Activated naive CD4-positive, alpha-beta T cell treated with anti-CD3 and anti-CD28 coated beads for 36 hours (primary cell): ENCODE measurements at regions of chr12 and their contacts with region 1.

Region 1: GRCh38 chr12:76031537-76032073 is at the start of gene PHLDA1:
- DNase-seq: peak; percentile 96
- H3K4me3 Mint-ChIP-seq: peak within 1 kb of the TSS; percentile 90
- H3K27ac Mint-ChIP-seq: peak within 1 kb of the TSS; percentile 91
- H3K4me1 Mint-ChIP-seq: peaks cover 29% of the 10 kb centered on the region
- H3K27me3 Mint-ChIP-seq: peaks cover 2% of the 10 kb centered on the region
- total RNA-seq, gene PHLDA1: 2.7 to 2.8 TPM

Region 2: DNA sequence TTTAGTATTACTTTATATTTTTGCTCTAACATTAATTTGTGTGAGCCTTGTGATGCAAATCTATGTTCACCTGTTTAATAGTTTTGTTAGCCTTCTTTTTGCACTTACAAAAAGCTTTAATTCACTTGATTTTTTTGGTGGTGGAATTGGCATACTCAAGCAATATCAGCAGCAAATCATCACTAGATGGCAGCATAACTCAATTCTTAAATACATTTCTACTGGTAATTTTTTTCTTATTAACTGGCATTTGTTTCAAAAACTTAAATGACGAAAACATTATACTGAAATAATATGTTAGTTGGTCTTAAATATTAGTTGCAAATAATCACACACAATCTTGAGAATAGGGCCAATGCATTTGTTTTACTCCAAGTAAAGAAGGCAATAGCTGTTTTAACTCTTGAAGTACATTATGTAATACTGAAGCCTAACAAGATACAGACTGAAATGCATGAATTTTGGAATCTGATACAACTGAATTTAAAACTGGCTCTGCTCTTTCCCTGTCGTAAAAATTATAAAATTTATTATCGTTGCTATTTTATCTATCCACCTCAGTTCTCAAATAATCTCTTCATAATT is 1342.4 kb before region 1 on chr12:
- CTCF ChIA-PET with region 1: no interaction called
- intact Hi-C with region 1: loop called (anchors 5 kb)
- DNase-seq: no peak
- H3K4me3 Mint-ChIP-seq: no peak overlapping the region
- H3K27ac Mint-ChIP-seq: no peak overlapping the region
- H3K4me1 Mint-ChIP-seq: no peaks in the 10 kb centered on the region
- H3K27me3 Mint-ChIP-seq: peaks cover 8% of the 10 kb centered on the region

Region 3: DNA sequence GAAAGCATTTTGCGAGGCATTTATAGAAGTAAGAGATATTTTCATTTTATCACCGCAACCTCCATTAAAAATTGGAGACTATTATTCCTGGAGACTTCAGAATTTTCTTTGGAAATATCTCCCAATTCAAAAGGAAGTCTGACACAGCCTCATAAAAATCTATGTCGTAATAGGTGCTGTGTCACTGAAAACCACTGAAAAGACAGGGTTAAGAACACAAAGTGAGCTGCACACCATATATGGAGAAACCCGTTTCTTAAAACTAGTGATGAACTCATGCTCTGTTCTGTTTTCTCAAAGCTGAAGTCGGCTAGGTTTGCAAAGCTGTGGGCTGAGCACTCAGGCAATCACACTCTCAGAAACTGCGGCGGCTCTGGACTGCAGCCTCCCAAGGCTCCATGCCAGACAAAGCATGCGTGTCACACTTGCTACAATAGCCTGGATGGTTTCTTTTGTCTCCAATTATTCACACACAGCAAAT is 551.1 kb before region 1 on chr12 and contains the start of gene GLIPR1:
- CTCF ChIA-PET with region 1: interaction called, 5 read pairs
- intact Hi-C with region 1: loop called (anchors 1 kb)
- DNase-seq: peak; percentile 77
- H3K4me3 Mint-ChIP-seq: peak within 1 kb of the TSS; percentile 87
- H3K27ac Mint-ChIP-seq: peak within 1 kb of the TSS; percentile 82
- H3K4me1 Mint-ChIP-seq: peaks cover 78% of the 10 kb centered on the region
- H3K27me3 Mint-ChIP-seq: no peaks in the 10 kb centered on the region
- total RNA-seq, gene GLIPR1: 1.3 to 1.5 TPM

Region 4: DNA sequence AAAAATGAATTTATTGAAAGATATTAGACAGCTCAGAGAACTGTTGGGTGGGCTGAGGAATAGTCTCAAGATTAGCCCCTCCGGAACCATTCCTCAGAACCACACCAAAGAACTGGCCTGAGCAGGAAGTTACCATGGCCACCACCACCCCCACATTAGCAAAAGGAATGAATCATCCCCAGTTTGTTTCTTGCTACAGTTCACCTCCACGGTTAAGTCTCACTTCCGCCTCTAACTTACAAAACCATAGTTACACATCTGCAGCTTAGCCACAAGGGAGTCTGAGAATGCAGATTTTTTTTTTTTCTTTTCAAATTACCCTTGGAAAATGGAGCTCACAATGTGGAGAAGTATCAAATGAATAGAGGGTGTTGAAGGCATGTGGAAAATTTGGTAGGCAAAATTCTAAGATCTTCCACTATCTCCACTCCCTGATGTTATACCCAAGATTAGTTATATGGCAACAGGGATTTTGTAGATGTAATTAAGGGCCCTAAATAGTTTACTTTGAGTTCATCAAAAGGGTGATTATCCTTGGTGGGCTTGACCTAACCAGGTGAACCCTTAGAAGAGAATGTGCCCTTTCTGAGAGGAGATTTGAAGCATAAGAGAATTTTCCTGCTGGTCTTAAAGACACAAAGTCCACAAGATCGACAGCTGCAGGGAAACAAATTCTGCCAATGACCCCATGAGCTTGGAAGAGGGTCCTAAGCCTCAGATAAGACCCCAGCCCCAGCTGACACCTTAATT is 390.4 kb before region 1 on chr12:
- CTCF ChIA-PET with region 1: no interaction called
- intact Hi-C with region 1: loop called (anchors 5 kb)
- DNase-seq: peak; percentile 26
- H3K4me3 Mint-ChIP-seq: no peak overlapping the region
- H3K27ac Mint-ChIP-seq: no peak overlapping the region
- H3K4me1 Mint-ChIP-seq: peaks cover 21% of the 10 kb centered on the region
- H3K27me3 Mint-ChIP-seq: peaks cover 12% of the 10 kb centered on the region

Region 5: DNA sequence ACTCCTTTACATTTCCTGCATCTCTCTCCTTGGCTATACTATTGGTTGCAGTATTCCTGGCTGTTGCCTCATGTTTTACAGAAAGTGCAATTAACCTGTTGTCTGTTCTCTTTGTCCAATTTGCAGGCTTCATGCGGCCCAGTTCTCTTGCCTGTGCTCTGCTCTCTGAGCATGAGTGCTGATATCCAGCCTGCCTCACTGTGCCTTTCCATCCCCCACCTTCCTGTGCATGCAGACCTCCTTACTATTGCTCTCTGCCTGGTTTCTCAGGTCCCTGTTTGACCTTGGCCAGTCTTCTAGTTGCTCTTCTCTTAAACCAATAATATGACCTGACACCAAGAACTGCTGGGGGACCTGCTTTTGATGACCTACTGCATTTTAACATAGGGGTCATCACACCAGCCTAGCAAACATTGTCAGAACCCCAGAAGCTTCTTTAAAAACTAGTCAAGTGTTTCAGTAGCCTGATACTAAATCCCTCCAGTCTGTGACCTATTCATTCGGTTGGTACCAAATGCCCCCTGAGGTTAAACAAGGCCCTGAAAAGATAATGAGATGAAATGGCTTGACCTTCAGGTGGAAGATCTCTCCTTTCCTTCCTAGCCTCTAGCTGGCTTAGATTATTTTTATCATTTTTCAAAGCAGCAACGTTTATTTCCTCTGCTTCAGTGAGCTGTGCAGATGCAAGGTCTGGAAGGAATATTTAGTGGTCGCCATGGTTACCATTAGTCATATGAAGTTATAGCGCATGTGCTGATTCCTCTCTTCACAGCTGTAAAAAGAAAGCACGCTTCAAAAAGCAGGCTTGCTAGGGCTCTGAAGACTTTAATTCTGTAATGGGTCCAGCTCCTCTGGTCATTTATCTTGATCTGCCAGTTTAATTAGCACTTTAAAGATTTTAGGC is 216.5 kb before region 1 on chr12:
- CTCF ChIA-PET with region 1: interaction called, 15 read pairs
- intact Hi-C with region 1: loop called (anchors 1 kb)
- DNase-seq: no peak
- H3K4me3 Mint-ChIP-seq: no peak overlapping the region
- H3K27ac Mint-ChIP-seq: no peak overlapping the region
- H3K4me1 Mint-ChIP-seq: no peaks in the 10 kb centered on the region
- H3K27me3 Mint-ChIP-seq: no peaks in the 10 kb centered on the region

Region 6: DNA sequence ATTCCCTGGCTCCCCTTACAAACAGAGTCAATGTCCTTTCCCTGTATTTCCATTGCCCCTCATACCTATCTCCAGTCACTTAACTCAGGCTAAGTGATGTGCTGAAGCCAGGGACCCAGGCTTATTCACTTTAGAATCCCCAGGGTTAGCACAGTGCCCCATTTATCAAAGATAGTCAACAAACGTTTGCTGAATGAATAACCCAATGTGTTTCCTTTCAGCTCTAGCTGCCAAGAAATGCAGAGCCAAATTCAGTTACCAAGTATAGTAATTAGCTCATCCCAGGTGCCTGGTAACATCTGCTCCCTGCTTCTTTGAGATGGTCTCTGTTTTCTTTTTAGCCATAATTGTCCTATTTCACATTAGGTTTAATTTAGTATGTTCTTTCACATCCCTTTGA is 189.5 kb before region 1 on chr12:
- CTCF ChIA-PET with region 1: no interaction called
- intact Hi-C with region 1: no loop called
- DNase-seq: no peak
- H3K4me3 Mint-ChIP-seq: no peak overlapping the region
- H3K27ac Mint-ChIP-seq: no peak overlapping the region
- H3K4me1 Mint-ChIP-seq: peaks cover 4% of the 10 kb centered on the region
- H3K27me3 Mint-ChIP-seq: peaks cover 8% of the 10 kb centered on the region

Region 7: GRCh38 chr12:75921622-75922283 is 109.9 kb before region 1 on chr12:
- CTCF ChIA-PET with region 1: no interaction called
- intact Hi-C with region 1: no loop called
- DNase-seq: no peak
- H3K4me3 Mint-ChIP-seq: no peak overlapping the region
- H3K27ac Mint-ChIP-seq: no peak overlapping the region
- H3K4me1 Mint-ChIP-seq: peaks cover 5% of the 10 kb centered on the region
- H3K27me3 Mint-ChIP-seq: peaks cover 18% of the 10 kb centered on the region

Region 8: GRCh38 chr12:75944097-75944904 is 87.3 kb before region 1 on chr12:
- CTCF ChIA-PET with region 1: interaction called, 3 read pairs
- intact Hi-C with region 1: loop called (anchors 1 kb)
- DNase-seq: peak; percentile 44
- H3K4me3 Mint-ChIP-seq: no peak overlapping the region
- H3K27ac Mint-ChIP-seq: peak overlapping the region; percentile 87
- H3K4me1 Mint-ChIP-seq: peaks cover 22% of the 10 kb centered on the region
- H3K27me3 Mint-ChIP-seq: no peaks in the 10 kb centered on the region

Region 9: DNA sequence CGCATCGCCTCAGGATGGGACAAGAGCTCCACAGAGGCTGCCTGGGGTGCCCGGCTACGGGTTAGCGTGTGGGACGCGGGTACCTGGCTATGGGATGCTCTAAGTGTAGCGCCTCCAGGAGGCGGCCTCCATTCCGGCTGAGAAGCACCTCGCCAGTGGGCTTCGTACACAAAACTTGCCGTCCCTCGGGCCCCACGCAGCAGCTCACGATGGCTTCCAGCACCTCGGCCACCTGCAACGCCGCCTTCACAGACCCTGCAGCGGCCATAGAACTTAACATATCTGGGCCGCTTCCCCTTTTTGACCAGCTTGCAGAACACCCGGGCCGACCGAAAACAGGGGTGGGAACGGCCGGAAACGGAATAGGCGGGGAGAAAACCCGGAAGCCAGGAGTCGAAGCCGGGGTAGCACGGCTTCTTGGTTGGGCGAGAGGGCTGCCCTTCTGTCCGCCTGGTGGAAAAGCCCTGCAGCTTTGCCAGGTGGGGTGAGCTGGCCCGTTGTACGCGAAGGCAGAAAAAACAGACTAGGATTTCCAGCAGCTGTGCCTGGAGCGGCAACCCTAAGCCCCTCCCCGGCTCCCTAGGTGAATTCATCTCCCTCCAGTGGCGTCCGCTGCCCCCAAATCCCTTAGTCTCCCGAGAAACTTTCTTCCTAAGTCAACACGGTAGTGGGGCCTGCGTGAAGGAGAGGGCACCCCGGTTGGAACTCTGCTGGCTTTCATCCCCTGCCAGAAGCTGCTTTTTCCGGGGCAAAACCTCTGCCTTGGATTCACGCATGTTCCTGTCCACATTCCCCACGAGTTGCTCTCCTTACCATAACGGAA is 316.7 kb after region 1 on chr12 and contains the start of gene BBS10:
- CTCF ChIA-PET with region 1: no interaction called
- intact Hi-C with region 1: loop called (anchors 2 kb)
- DNase-seq: peak; percentile 92
- H3K4me3 Mint-ChIP-seq: peak within 1 kb of the TSS; percentile 90
- H3K27ac Mint-ChIP-seq: peak within 1 kb of the TSS; percentile 86
- H3K4me1 Mint-ChIP-seq: peaks cover 22% of the 10 kb centered on the region
- H3K27me3 Mint-ChIP-seq: no peaks in the 10 kb centered on the region
- total RNA-seq, gene BBS10: 3.3 TPM

Region 10: GRCh38 chr12:76391461-76391860 is 359.9 kb after region 1 on chr12:
- CTCF ChIA-PET with region 1: no interaction called
- intact Hi-C with region 1: no loop called
- DNase-seq: no peak
- H3K4me3 Mint-ChIP-seq: no peak overlapping the region
- H3K27ac Mint-ChIP-seq: no peak overlapping the region
- H3K4me1 Mint-ChIP-seq: peaks cover 2% of the 10 kb centered on the region
- H3K27me3 Mint-ChIP-seq: no peaks in the 10 kb centered on the region